Activated T-helper 1 cell treated with anti-CD3 and anti-CD28 coated beads, Interleukin-12 subunit alpha, Interleukin-12 subunit beta, Interleukin-2, Interleukin-4 antibody, amounts not matched to agents 30 ng/mL and 10 ng/mL and 1 ng/mL, durations not matched to agents 14 hours and 24 hours and 36 hours (primary cell): ENCODE measurements at regions of chr1 and their contacts with region 1.

Region 1: DNA sequence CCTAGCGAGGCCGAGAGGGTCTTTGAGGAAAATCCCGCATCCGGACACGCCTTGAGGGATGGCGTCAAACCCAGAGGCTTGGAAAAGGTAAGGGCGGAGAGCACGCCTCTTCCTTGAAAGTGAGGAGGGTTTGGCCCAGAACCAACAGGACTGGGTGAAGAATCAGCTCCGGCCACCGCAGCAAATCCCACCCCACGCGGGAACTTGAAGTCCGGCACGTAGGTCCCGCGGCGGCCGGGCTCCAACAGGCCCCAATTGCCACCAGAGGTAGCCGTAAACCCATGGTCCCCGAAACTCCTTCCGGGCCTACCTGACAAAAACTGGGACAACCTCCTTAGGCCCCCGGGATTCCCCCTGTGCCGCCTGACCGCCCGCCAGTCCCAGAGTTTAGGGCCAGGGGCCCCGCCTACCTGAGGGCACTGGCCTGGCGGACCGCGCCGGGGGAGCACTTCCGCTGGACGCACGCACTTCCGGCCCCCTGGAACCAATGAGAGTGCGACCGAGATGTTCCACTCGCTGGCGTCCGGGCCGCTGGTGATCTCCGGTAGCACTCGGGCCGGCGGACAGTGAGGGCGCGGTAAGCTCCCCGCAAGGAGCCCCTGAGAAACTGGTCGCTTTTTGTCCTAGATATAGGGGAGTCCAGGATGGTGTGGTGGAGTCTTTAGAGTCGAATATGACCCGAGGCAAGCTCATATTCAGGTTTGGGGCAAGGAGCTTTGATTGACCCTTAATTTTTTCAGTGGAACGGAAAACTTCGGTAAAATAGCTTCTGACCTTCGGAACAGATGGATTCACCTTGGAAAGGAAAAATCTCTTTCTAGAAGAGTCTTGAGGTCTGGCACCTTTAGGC is at the starts of genes LZIC and NMNAT1:
- DNase-seq: peak; percentile 88
- H3K4me3 Mint-ChIP-seq: peak within 1 kb of the TSS; percentile 100
- H3K27ac Mint-ChIP-seq: peak within 1 kb of the TSS; percentile 97
- H3K4me1 Mint-ChIP-seq: peaks cover 12% of the 10 kb centered on the region
- H3K27me3 Mint-ChIP-seq: no peaks in the 10 kb centered on the region
- total RNA-seq, gene LZIC: 29.9 and 35.9 TPM in 2 replicates
- total RNA-seq, gene NMNAT1: 5.0 and 5.8 TPM in 2 replicates

Region 2: DNA sequence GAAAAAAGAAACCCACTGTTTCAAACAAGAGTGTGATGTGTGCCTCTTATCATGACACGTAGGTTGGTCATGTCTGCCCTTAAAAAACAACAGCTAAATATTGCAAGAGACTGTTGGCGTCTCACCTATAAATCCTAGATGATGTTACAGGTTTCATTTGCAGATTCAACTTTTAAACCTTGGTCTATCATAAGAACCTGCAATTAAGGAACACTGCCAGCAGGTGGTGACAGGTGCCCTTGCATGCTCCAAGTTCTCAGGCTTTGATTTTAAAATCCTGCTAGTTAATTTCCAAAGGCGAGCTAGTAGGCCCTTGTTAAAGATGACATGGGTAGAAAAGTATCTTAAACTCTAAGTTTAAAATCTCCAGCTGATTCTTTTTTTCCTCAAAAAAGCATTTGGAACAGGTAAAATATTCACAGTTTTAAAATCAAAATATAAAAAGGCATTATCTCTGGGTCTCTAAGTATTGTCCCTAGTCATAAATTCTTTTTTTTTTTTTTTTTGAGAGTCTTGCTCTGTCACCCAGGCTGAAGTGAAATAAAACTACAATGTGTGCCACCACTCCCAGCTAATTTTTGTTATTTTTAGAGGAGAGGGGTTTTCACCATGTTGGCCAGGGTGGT is 158.5 kb before region 1 on chr1:
- intact Hi-C with region 1: loop called (anchors 2 kb)
- DNase-seq: peak; percentile 50
- H3K4me3 Mint-ChIP-seq: no peak overlapping the region
- H3K27ac Mint-ChIP-seq: no peak overlapping the region
- H3K4me1 Mint-ChIP-seq: peaks cover 37% of the 10 kb centered on the region
- H3K27me3 Mint-ChIP-seq: no peaks in the 10 kb centered on the region

Region 3: DNA sequence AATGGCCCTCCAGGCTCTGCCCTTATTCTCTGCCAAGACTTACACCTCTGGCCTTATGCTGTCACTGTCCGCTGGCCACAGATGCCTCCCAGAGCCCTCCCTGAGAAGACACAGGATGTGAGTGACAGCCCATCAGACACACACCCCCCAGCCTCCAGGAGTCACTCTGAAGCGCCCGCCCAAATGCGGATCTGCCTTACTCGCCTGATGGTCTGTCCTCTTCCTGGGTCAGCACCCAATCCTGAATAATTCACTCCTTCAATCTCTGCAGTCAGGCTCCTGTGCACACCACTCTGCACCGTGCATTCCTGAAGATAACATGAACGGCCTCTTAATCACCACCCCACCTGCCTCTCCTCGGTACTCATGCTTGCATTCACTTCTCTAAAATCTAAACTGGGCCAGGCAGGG is 134.1 kb before region 1 on chr1:
- intact Hi-C with region 1: no loop called
- DNase-seq: no peak
- H3K4me3 Mint-ChIP-seq: no peak overlapping the region
- H3K27ac Mint-ChIP-seq: no peak overlapping the region
- H3K4me1 Mint-ChIP-seq: peaks cover 25% of the 10 kb centered on the region
- H3K27me3 Mint-ChIP-seq: no peaks in the 10 kb centered on the region

Region 4: GRCh38 chr1:10152709-10153284 is 209.6 kb after region 1 on chr1:
- intact Hi-C with region 1: loop called (anchors 2 kb)
- DNase-seq: peak; percentile 10
- H3K4me3 Mint-ChIP-seq: no peak overlapping the region
- H3K27ac Mint-ChIP-seq: no peak overlapping the region
- H3K4me1 Mint-ChIP-seq: no peaks in the 10 kb centered on the region
- H3K27me3 Mint-ChIP-seq: no peaks in the 10 kb centered on the region

Region 5: DNA sequence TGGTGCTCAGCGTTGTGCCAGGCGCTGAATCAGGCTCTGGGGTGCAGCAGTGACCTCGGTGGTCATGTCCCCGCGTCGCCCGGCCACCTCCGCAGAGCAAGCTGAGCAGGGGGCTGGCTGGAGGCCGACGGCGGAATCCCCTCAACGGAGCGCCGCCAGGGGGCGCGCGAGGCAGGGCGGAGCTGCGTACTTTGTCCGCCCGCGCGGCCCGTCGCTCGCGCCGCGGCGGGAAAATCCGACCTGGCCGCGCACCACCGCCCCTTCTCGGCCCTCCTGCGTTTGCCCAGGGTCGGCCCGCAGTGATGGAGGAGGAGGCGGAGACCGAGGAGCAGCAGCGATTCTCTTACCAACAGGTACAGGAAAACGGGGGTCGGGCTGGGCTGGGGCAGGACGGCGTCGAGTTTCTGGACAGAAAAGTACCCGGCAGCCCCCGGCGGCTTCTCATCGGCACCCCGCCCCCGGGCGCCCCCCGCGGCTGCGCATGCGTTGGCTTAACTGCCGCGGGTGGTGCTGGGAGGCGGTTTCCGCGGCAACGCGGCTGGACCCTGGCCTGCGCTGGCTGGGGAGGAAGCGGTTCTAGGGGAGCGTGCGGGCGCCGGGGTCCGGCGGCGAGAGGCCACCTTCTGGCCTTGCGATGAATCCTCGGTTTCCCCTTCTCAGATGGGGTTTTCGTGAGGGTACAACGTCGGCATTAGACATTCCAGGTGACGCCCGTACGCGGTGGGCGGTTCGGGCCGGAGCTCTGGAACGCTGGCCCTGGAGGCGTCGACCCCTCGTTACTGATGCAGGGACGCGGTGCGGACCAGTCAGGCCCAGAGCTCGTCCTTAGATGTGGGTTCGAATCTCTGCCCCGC is 487.3 kb after region 1 on chr1 and contains the start of gene CENPS:
- intact Hi-C with region 1: loop called (anchors 2 kb)
- DNase-seq: peak; percentile 86
- H3K4me3 Mint-ChIP-seq: peak within 1 kb of the TSS; percentile 92
- H3K27ac Mint-ChIP-seq: peak within 1 kb of the TSS; percentile 92
- H3K4me1 Mint-ChIP-seq: peaks cover 24% of the 10 kb centered on the region
- H3K27me3 Mint-ChIP-seq: no peaks in the 10 kb centered on the region
- total RNA-seq, gene CENPS: 22.1 and 23.4 TPM in 2 replicates